GM10248 (cell line): ENCODE measurements at regions of chr6 and their contacts with region 1.

Region 1: DNA sequence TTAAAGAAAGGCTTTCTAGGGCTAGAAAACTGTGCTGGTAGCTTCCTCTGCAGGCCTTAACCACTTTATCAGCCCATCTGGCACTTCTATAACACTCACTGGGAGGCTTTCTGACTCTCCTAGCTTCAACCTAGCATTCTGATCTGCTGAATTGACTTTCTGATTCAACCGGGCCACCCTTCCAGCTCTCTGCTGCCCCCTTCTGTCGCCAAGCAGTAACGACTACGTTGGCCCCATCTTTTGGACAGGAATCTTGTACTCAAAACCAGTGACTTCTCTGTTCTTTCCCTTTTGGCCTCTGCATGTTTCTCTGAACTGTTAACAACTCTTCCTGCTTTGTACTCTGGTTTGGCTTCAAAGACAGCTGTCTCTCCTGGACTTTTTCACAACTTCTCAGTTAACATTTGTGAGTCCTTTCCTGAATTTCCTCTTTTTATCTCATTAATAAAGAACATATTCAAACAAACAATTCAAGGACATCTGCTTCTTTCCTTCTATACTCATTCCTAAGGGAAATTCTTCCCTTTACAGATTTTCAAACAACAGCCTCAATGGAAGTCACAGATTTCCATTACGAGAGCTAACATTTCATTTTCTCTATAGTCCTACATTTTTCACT is 43.9 kb upstream of the FAM135A start:
- DNase-seq: peak; percentile 63
- CTCF ChIP-seq: peak; percentile 88

Region 2: DNA sequence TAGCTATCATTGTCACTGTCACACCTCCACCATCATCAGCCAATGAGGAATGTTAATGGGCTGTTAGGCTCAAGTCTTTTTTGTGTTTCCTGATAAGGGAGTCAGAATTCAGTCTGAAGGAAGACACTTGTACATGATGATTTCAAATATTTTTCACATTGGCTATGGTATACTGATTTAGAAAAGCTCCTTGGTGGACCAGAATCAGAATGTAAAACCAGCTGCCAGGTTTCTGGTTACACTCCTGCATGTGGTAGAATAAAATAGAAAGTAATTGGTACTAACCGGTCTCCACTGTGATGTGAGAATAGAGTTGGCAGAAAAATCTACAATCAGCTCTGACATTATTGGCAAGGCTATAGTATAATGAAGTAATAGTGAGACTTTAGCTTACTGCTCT is 77.2 kb before region 1 on chr6:
- CTCF ChIA-PET with region 1: interaction called, 20 read pairs
- POLR2A ChIA-PET with region 1: no interaction called
- DNase-seq: no peak
- CTCF ChIP-seq: no peak

Region 3: GRCh38 chr6:70310063-70310694 is 59.3 kb before region 1 on chr6:
- CTCF ChIA-PET with region 1: interaction called, 137 read pairs
- POLR2A ChIA-PET with region 1: no interaction called
- DNase-seq: no peak
- CTCF ChIP-seq: peak; percentile 64

Region 4: DNA sequence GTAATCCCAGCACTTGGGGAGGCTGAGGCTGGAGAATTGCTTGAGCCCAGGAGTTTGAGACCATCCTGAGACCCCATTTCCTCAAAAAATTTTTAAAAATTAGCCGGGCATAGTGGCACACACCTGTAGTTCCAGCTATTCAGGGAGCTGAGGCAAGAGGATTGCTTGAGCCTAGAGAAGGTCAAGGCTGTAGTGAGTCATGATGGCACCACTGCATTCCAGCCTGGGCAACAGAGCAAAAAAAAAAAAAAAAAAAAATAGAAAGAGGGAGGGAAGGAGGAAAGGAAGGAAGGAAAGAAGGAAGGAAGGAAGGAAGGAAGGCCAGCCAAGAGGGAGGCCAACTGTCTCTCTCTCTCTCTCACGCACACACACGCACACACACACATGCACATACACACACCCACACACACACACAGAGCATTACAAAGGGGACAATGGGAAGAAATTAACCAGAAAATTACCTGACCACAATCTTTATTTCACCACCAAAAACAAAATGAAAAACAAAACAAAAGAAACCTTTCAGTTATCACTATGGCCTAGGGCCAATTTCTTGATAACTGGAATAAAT is 16.0 kb before region 1 on chr6:
- CTCF ChIA-PET with region 1: interaction called, 10 read pairs
- POLR2A ChIA-PET with region 1: no interaction called
- DNase-seq: no peak
- CTCF ChIP-seq: no peak

Region 5: GRCh38 chr6:70390067-70390466 is 20.6 kb after region 1 on chr6:
- CTCF ChIA-PET with region 1: interaction called, 59 read pairs
- POLR2A ChIA-PET with region 1: no interaction called
- DNase-seq: no peak
- CTCF ChIP-seq: no peak

Region 6: GRCh38 chr6:71012866-71013469 is 643.5 kb after region 1 on chr6:
- CTCF ChIA-PET with region 1: interaction called, 20 read pairs
- POLR2A ChIA-PET with region 1: no interaction called
- DNase-seq: peak; percentile 56
- CTCF ChIP-seq: peak; percentile 85